ENCODE measurements at regions of chr6 and their contacts with region 1.

Region 1: DNA sequence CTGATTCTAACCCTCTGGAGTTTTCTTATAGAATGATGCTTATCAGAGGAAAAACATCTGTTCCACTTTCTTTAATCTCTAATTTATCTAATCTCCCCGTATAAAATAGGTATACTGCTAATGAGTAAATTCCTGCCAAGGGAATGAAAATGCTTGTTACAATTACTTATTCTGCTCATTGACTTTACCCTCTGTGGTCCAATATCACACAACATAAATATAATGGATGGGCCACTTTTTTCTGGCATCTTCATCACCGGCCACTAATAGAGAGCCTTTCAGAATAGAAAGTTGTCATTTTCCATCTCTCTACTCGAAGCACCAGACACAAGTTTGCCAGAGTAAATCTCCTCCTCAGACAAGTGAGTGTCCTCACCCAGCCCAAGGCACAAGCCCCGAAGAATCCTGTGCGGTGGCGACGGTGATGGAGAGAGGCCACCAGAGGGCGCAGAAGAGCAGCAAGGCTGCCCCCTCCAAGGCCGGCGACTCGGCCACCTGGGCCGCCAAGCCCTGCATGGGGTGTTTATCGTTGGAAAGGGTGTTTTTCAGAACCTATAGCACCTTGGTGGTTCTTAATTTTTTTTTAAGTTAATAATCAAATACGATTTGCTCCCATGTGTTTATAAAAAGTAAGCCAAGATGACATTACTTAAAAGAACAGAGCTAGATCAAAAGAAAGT is 212.9 kb upstream of the ARID1B start:
- DNase-seq: peak; percentile 65
- H3K4me3 Mint-ChIP-seq: no peak overlapping the region
- H3K27ac Mint-ChIP-seq: no peak overlapping the region
- H3K4me1 Mint-ChIP-seq: no peaks in the 10 kb centered on the region
- H3K27me3 Mint-ChIP-seq: no peaks in the 10 kb centered on the region
- CTCF ChIP-seq: peak; percentile 90

Region 2: DNA sequence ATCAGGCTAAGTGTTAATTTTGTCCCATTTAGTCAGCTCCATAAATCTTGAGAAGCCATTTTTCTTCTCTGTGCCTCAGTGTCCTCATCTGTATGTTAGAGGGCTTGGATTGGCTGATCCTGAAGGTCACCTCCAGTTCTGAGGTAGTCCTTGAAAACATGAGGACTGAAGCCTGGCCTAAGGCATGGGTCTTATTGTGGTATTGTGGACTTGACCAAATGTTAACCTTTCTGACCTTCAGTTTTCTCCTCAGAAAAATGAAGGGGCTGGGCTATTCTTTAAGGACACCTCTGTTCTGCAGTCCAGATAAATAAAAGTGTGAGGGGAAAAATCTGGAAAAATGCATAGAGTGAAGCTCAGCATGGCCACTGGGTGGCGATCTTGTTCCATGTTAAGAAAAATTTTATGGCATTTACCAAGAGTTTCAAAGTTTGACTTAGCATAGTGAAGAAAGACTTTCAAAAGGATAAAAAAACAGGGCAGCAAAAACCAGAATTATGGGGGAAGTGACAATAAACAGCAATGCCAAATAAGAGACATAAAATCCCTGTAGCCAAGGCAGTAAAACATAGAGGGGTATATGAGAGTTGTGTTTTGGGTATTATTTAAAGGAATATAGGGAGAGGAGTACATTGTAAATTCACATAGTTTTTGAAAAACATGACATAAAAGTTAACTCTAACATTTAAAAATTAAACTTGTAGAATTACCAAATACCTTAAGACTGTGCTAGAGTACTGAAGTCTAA is 1236.8 kb before region 1 on chr6:
- CTCF ChIA-PET with region 1: no interaction called
- POLR2A ChIA-PET with region 1: no interaction called
- intact Hi-C with region 1: loop called (anchors 1 kb)
- DNase-seq: peak; percentile 47
- H3K4me3 Mint-ChIP-seq: no peak overlapping the region
- H3K27ac Mint-ChIP-seq: no peak overlapping the region
- H3K4me1 Mint-ChIP-seq: peaks cover 6% of the 10 kb centered on the region
- H3K27me3 Mint-ChIP-seq: no peaks in the 10 kb centered on the region
- CTCF ChIP-seq: peak; percentile 74

Region 3: DNA sequence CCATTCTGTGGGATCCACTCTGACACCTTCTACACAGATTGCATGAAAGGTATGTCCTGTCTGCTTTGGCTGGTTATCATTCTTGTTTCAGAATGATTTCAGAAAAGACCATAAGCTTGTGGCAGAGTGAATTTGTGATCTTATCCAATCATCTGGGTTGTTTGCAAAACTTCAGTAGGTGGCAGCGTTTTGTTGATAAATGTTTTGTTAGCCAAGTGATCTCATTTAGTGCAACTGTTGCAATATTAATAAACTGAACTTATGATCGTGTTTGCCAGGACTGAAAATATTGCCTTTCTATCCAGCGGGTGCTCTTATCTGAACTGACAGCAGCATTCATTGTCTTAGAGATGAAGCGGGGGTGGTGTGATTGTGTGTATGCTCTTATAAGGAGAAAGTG is 495.4 kb before region 1 on chr6:
- CTCF ChIA-PET with region 1: no interaction called
- POLR2A ChIA-PET with region 1: no interaction called
- intact Hi-C with region 1: loop called (anchors 10 kb)
- DNase-seq: peak; percentile 5
- H3K4me3 Mint-ChIP-seq: no peak overlapping the region
- H3K27ac Mint-ChIP-seq: no peak overlapping the region
- H3K4me1 Mint-ChIP-seq: peaks cover 5% of the 10 kb centered on the region
- H3K27me3 Mint-ChIP-seq: no peaks in the 10 kb centered on the region
- CTCF ChIP-seq: no peak

Region 4: GRCh38 chr6:156111913-156112312 is 452.4 kb before region 1 on chr6:
- CTCF ChIA-PET with region 1: no interaction called
- POLR2A ChIA-PET with region 1: no interaction called
- intact Hi-C with region 1: no loop called
- DNase-seq: no peak
- H3K4me3 Mint-ChIP-seq: no peak overlapping the region
- H3K27ac Mint-ChIP-seq: no peak overlapping the region
- H3K4me1 Mint-ChIP-seq: no peaks in the 10 kb centered on the region
- H3K27me3 Mint-ChIP-seq: no peaks in the 10 kb centered on the region
- CTCF ChIP-seq: no peak

Region 5: DNA sequence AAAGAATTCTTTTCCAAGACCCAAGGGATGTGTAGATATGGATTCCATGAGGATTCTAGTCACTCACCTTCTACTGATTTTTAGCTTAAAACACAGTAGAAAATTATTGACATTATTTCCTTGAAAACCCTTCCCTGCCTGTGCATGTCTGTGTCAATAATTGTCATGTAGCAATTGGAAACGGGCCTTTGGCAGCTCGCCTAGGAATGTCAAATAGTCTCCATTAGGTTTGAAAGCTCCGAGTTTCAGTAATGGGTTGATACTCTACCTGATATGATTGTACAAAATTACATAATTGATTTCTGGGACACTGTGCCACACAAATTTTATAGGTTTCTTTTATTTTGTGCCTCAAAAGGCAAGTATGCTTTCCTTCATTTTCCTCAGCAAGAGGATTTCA is 302.3 kb before region 1 on chr6:
- CTCF ChIA-PET with region 1: no interaction called
- POLR2A ChIA-PET with region 1: no interaction called
- intact Hi-C with region 1: no loop called
- DNase-seq: peak; percentile 25
- H3K4me3 Mint-ChIP-seq: no peak overlapping the region
- H3K27ac Mint-ChIP-seq: no peak overlapping the region
- H3K4me1 Mint-ChIP-seq: no peaks in the 10 kb centered on the region
- H3K27me3 Mint-ChIP-seq: no peaks in the 10 kb centered on the region
- CTCF ChIP-seq: no peak

Region 6: GRCh38 chr6:156816505-156816904 is 252.2 kb after region 1 on chr6:
- CTCF ChIA-PET with region 1: no interaction called
- POLR2A ChIA-PET with region 1: no interaction called
- intact Hi-C with region 1: no loop called
- DNase-seq: peak; percentile 36
- H3K4me3 Mint-ChIP-seq: peak overlapping the region; percentile 50
- H3K27ac Mint-ChIP-seq: peak overlapping the region; percentile 86
- H3K4me1 Mint-ChIP-seq: peaks cover 17% of the 10 kb centered on the region
- H3K27me3 Mint-ChIP-seq: no peaks in the 10 kb centered on the region
- CTCF ChIP-seq: no peak

Region 7: DNA sequence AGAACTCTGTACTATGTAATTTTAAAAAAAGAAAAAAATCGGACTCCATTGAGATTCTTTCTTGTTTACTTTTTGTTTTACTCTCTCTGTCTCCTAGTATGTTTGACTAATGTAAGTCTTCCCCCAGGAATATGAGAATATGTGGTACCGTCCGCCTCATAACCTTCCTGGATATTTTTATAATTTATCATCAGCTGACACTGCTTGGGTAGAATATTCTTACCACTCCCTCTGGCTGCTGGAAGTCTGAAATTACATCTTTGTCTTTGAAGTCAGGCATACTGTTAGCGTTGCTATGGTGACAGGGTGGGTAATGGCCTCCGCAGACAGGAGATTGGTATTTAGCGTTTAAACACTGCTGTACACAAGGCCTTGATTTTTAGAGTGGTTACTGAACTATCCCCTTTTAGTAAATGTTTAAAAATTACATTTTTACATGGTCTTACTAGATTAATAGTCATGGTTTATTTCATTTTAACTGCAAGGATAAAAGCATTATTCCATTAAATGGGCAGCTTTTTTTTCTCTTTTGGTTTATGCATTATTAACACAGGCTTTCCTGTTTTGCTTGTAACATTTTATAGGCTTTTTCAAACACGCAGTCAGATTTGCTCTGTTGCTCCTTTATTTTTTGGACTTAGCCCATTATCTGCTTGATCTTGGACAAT is 389.3 kb after region 1 on chr6:
- CTCF ChIA-PET with region 1: no interaction called
- POLR2A ChIA-PET with region 1: no interaction called
- intact Hi-C with region 1: loop called (anchors 1 kb)
- DNase-seq: peak; percentile 90
- H3K4me3 Mint-ChIP-seq: peak overlapping the region; percentile 58
- H3K27ac Mint-ChIP-seq: peak overlapping the region; percentile 93
- H3K4me1 Mint-ChIP-seq: peaks cover 56% of the 10 kb centered on the region
- H3K27me3 Mint-ChIP-seq: no peaks in the 10 kb centered on the region
- CTCF ChIP-seq: no peak

Region 8: GRCh38 chr6:157184202-157185020 is 620.1 kb after region 1 on chr6:
- CTCF ChIA-PET with region 1: interaction called, 3 read pairs
- POLR2A ChIA-PET with region 1: no interaction called
- intact Hi-C with region 1: loop called (anchors 1 kb)
- DNase-seq: peak; percentile 57
- H3K4me3 Mint-ChIP-seq: no peak overlapping the region
- H3K27ac Mint-ChIP-seq: no peak overlapping the region
- H3K4me1 Mint-ChIP-seq: peaks cover 14% of the 10 kb centered on the region
- H3K27me3 Mint-ChIP-seq: no peaks in the 10 kb centered on the region
- CTCF ChIP-seq: peak; percentile 94

Region 9: GRCh38 chr6:157274471-157275226 is 710.4 kb after region 1 on chr6:
- CTCF ChIA-PET with region 1: no interaction called
- POLR2A ChIA-PET with region 1: no interaction called
- intact Hi-C with region 1: loop called (anchors 2 kb)
- DNase-seq: peak; percentile 68
- H3K4me3 Mint-ChIP-seq: peak overlapping the region; percentile 73
- H3K27ac Mint-ChIP-seq: no peak overlapping the region
- H3K4me1 Mint-ChIP-seq: no peaks in the 10 kb centered on the region
- H3K27me3 Mint-ChIP-seq: no peaks in the 10 kb centered on the region
- CTCF ChIP-seq: peak; percentile 49

Measured in MCF 10A (cell line).